Dendritic cell treated with granulocyte-macrophage colony-stimulating factor and Interleukin-4, amounts not matched to agents 40 ng/mL and 50 ng/mL, for 4 days (primary cell): ENCODE measurements at regions of chr11 and their contacts with region 1.

Region 1: DNA sequence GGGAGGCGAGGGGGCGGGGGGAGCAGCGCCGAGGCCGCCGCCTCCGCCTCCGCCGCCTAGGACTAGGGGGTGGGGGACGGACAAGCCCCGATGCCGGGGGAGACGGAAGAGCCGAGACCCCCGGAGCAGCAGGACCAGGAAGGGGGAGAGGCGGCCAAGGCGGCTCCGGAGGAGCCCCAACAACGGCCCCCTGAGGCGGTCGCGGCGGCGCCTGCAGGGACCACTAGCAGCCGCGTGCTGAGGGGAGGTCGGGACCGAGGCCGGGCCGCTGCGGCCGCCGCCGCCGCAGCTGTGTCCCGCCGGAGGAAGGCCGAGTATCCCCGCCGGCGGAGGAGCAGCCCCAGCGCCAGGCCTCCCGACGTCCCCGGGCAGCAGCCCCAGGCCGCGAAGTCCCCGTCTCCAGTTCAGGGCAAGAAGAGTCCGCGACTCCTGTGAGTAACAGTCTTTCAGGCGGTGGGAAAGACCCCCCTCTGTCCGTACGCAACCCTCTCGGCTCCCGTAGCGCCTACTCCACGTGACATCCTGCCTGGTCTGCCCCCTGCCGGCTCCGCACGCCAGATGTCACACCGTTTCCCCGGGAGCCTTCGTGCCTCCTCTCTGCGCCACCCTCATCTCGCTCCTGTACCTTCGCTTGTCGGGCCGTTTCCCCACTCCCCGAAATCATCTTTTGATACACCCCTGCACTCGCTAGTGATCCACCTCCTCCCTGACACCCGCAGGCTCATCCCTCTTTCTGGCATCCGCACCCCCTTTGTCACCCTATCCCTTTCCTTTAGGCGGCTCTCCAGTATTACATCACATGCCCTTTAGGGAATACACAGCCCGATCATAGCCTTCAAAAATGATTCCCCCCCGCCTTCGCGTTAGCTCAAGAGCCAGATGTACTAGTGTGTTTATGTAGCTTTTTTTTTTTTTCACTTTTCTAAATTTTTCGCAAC is 598 bp downstream of the ZFP91 start:
- H3K4me3 Mint-ChIP-seq: peak overlapping the region; percentile 100
- H3K27ac Mint-ChIP-seq: peak overlapping the region; percentile 99
- H3K4me1 Mint-ChIP-seq: peaks cover 36% of the 10 kb centered on the region
- H3K27me3 Mint-ChIP-seq: no peaks in the 10 kb centered on the region

Region 2: DNA sequence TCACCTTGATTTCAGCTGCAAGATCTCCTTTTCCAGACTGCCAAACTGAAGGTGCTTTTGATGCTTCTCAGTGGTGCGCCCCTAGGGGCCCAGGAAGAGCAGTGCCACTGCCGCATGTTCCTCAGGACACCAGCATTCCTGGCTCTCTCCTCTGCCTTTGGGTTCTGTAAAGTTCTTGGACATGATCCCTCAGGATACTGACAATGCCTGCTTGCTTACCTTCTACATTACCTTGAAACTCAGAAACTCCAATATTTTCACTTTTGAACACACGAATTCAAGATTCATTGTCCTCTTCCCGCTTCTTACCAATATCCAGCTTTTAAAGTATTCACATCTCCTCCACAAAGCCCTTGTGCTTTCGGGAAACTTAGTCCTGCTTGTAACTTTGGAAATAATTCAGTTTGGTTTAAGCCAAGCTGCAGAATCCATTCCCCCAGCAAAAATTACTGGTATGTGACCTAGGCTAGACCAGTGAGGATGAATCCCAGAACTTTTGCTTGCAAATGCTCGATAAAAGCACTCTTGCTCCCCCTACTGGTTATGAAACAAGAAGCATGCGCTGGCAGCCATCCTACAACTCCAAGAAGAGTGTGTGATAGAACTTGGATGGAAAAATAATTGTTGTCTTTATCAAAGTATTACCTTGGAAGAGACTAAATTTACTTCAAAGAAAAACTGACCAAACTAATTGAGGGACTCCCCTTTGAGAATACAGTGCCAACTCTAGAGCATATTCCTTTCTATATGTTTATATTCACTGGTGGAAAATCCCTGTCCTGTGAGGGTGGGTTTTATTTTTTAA is 55.0 kb before region 1 on chr11:
- intact Hi-C with region 1: loop called (anchors 2 kb)
- H3K4me3 Mint-ChIP-seq: peak overlapping the region; percentile 60
- H3K27ac Mint-ChIP-seq: peak overlapping the region; percentile 51
- H3K4me1 Mint-ChIP-seq: peaks cover 31% of the 10 kb centered on the region
- H3K27me3 Mint-ChIP-seq: no peaks in the 10 kb centered on the region

Region 3: DNA sequence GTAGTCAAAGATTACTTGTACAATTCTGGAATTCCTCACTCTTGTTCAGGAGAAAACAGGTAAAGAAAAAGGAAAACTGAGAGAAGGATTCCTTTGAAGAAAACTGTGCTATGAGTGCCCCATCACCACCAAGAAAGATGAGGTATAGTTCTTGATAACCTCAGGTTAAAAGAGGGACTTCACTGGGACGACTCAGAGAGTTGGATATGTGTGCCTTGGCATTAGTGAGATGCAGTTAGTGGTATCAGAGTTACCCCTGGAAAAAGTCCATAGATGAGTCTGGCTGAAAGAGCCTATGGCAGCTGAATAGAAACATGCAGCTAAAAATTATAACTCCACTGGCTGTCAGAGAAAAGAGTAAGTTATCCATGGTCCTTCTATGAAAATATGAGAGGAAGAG is 32.6 kb before region 1 on chr11:
- intact Hi-C with region 1: no loop called
- H3K4me3 Mint-ChIP-seq: no peak overlapping the region
- H3K27ac Mint-ChIP-seq: no peak overlapping the region
- H3K4me1 Mint-ChIP-seq: no peaks in the 10 kb centered on the region
- H3K27me3 Mint-ChIP-seq: no peaks in the 10 kb centered on the region

Region 4: DNA sequence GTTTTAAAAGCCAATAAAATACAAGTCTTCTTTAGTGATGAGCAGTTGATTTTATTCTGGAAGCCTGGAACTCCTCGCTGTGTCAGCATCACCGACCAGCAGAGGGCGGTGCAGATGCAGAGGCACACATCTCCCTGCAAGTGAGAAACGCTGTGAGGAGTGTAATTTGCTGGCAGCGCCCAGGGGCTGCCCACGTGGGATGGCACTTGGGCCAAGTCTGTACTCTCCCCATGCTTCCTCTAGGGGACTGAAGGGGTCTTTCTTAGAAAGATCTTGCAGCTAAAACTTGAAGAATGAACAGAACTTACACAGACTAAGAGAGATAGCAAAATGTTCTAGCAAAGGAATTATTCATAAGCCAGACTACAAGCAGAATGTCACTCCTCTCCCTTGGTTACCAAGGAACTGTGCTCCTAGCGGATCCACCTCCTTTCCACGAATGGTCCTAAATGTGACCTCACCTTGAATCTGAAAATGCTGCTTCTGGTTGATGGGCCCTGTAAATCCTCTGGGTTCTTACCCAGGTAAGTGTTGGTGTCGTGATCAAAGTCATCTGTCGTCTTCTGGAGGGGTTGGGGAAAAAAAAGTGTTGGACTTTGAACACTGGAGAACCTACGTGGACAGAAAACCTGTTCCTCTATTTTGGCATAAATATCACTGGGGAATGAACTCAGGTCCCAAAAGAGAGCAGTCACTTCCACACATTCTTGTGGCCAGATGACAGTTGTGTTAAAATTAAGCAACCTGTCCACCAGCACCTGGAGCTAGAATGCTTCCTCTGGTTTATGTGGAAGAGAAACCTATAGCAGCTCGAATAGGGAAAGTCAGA is 74.8 kb after region 1 on chr11:
- intact Hi-C with region 1: no loop called
- H3K4me3 Mint-ChIP-seq: no peak overlapping the region
- H3K27ac Mint-ChIP-seq: no peak overlapping the region
- H3K4me1 Mint-ChIP-seq: peaks cover 7% of the 10 kb centered on the region
- H3K27me3 Mint-ChIP-seq: no peaks in the 10 kb centered on the region

Region 5: GRCh38 chr11:58675334-58676155 is 96.1 kb after region 1 on chr11:
- intact Hi-C with region 1: loop called (anchors 5 kb)
- H3K4me3 Mint-ChIP-seq: no peak overlapping the region
- H3K27ac Mint-ChIP-seq: no peak overlapping the region
- H3K4me1 Mint-ChIP-seq: no peaks in the 10 kb centered on the region
- H3K27me3 Mint-ChIP-seq: no peaks in the 10 kb centered on the region

Region 6: GRCh38 chr11:59144579-59145345 is 565.3 kb after region 1 on chr11:
- intact Hi-C with region 1: loop called (anchors 2 kb)
- H3K4me3 Mint-ChIP-seq: peak overlapping the region; percentile 96
- H3K27ac Mint-ChIP-seq: peak overlapping the region; percentile 91
- H3K4me1 Mint-ChIP-seq: peaks cover 57% of the 10 kb centered on the region
- H3K27me3 Mint-ChIP-seq: no peaks in the 10 kb centered on the region

Region 7: DNA sequence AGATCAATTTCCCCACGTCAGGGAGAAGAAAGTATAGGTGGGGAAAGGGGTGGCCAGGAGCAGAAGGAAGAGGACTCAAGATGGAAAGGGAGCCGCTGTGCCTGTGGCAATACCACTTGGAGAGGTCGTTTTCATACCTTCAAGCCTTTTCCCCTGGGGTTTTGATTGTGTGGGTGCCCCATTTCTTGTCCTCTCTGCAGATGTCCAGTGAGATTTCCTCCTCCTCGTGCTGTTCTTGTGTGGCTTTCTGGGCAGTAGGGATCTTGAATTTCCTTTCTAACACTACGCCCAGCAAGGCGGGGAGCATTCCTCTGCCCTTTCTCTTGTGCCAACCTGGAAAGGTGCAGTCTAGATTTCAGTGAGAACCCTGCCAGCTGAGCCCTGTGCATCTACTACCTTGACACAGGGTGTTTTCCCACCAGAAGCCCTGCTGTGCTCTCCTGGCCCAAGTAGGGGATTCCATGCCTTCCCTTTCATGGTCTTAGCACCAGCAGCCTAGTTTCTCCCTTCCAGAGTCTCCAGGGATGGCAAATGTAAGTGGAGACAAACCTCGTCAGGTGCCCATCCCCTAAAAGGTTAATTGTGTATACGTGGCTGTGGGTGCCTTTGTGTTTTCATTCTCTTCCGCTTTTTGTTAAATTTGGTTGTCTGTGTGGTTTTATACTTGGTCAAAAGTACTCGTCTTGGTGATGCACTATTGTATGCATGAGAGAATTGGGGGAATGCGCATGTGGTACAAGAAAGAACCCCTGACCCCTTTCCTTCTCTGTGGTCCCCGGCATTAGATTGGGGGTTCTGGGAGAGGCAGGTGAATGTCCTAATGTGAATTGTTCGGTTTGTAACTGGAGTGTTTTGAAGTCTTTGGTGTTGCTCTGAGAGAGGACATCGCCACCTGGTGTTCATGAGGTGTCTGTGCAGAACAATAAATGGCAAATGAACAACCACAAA is 704.6 kb after region 1 on chr11:
- intact Hi-C with region 1: loop called (anchors 10 kb)
- H3K4me3 Mint-ChIP-seq: peak overlapping the region; percentile 77
- H3K27ac Mint-ChIP-seq: peak overlapping the region; percentile 78
- H3K4me1 Mint-ChIP-seq: peaks cover 46% of the 10 kb centered on the region
- H3K27me3 Mint-ChIP-seq: peaks cover 2% of the 10 kb centered on the region